Activated B cell treated with CpG ODN at 0.5 μM for 24 hours (primary cell): ENCODE measurements at regions of chr13 and their contacts with region 1.

Region 1: DNA sequence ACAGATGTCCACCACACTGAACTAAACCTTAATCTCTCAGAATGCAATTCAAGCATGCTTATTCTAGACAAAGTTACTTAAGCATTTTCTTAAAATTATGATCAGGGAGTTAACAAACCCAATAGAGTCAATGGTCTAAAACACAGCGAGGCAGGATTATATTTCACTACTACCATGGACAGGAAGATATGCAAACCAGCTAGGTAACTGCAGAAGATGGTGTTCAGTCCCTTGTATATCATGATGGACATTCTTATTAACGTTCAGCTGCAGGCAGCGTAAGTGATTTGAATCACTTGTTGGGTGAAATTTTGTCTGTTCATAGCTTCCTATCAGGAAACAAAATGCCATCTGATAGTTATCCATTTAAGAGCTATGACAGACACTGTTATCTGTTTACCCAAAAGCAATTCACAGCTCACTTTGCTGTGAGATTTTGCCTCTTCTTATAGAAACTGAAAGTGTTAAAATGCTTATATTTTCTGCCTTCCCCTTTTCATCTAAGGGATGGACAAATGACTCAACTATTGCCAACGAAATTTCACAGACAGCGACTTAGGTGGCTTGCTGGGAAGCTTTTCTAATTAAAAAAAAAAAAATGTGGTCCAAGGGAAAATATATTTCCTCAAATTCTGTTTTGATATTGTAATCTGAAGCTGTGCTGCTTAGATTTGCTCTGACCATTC is 591.9 kb downstream of the DACH1 start:
- DNase-seq: no peak
- ATAC-seq: no peak
- H3K4me3 Mint-ChIP-seq: no peak overlapping the region
- H3K27ac Mint-ChIP-seq: no peak overlapping the region
- H3K4me1 Mint-ChIP-seq: no peaks in the 10 kb centered on the region
- H3K27me3 Mint-ChIP-seq: no peaks in the 10 kb centered on the region
- CTCF ChIP-seq: no peak

Region 2: DNA sequence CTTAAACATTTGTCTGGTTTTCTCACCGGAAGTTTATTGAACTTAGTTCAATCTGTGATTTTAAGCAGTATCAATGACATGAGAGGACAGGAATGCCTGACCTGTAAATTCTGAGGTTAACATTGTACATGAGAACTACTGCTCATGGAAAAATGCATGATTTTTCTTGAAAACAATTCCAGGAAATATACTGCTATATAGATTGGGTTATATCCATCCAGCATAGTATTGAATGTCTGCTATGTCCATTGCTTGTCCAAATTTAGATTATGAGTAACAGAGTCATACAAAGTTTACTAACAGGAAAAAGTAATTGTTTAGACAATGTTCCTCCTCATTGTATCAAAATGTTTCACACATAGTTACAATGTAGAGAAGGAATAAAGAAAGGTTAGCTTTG is 14.8 kb before region 1 on chr13:
- CTCF ChIA-PET with region 1: no interaction called
- POLR2A ChIA-PET with region 1: no interaction called
- intact Hi-C with region 1: loop called (anchors 1 kb)
- DNase-seq: no peak
- ATAC-seq: no peak
- H3K4me3 Mint-ChIP-seq: no peak overlapping the region
- H3K27ac Mint-ChIP-seq: no peak overlapping the region
- H3K4me1 Mint-ChIP-seq: no peaks in the 10 kb centered on the region
- H3K27me3 Mint-ChIP-seq: no peaks in the 10 kb centered on the region
- CTCF ChIP-seq: no peak